Activated naive CD4-positive, alpha-beta T cell treated with anti-CD3 and anti-CD28 coated beads, Interleukin-2, amount 10 ng/mL, durations not matched to agents 7 days and 5 days (primary cell): ENCODE measurements at regions of chr19 and their contacts with region 1.

Region 1: GRCh38 chr19:9934132-9934950 is 2.0 kb downstream of the OLFM2 start:
- DNase-seq: peak; percentile 83
- H3K4me3 Mint-ChIP-seq: no peak overlapping the region
- H3K27ac Mint-ChIP-seq: no peak overlapping the region
- H3K4me1 Mint-ChIP-seq: peaks cover 26% of the 10 kb centered on the region
- H3K27me3 Mint-ChIP-seq: peaks cover 82% of the 10 kb centered on the region

Region 2: GRCh38 chr19:10000171-10000826 is 66.0 kb after region 1 on chr19:
- CTCF ChIA-PET with region 1: interaction called, 21 read pairs
- DNase-seq: peak; percentile 78
- H3K4me3 Mint-ChIP-seq: no peak overlapping the region
- H3K27ac Mint-ChIP-seq: no peak overlapping the region
- H3K4me1 Mint-ChIP-seq: peaks cover 12% of the 10 kb centered on the region
- H3K27me3 Mint-ChIP-seq: peaks cover 53% of the 10 kb centered on the region

Region 3: DNA sequence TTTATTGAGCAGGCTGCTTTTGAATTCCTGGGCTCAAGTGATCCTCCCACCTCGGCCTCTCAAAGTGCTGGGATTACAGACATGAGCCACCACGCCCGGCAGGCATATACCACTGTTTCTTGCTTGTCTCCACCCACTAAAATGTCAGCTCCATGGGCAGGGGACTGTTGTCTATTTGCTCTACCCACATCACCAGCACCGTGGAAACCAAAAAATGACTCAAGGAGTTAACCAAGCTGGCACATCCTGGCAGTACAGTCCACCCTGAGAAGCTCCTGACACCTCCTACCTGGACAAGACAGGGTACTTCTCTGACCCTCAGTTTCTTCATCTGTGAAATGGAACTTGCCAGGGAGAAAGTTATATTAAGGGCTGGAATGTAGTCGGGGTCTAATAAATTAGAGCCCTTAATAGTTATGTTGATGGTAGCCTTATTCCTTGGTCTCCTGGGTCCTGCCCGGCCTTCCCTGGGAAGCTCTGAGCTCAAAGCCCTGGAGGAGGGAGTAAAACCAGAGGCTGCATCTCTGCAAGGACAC is 92.9 kb after region 1 on chr19:
- CTCF ChIA-PET with region 1: interaction called, 66 read pairs
- DNase-seq: no peak
- H3K4me3 Mint-ChIP-seq: no peak overlapping the region
- H3K27ac Mint-ChIP-seq: no peak overlapping the region
- H3K4me1 Mint-ChIP-seq: no peaks in the 10 kb centered on the region
- H3K27me3 Mint-ChIP-seq: no peaks in the 10 kb centered on the region